B cell (primary cell): ENCODE measurements at regions of chr5 and their contacts with region 1.

Region 1: GRCh38 chr5:173781814-173782670 is 106.1 kb upstream of the CPEB4 start:
- DNase-seq: peak; percentile 89
- ATAC-seq: peak; percentile 79
- H3K4me3 ChIP-seq: peak overlapping the region in 1 of 5 experiments; percentile 15
- H3K4me3 Mint-ChIP-seq: peak overlapping the region; percentile 69
- H3K27ac ChIP-seq: peak overlapping the region; percentile 56 to 68
- H3K27ac Mint-ChIP-seq: peak overlapping the region; percentile 90
- H3K4me1 ChIP-seq: peaks cover 47 to 59% of the 10 kb centered on the region in 2 donors
- H3K4me1 Mint-ChIP-seq: peaks cover 63% of the 10 kb centered on the region
- H3K27me3 ChIP-seq: no peaks in the 10 kb centered on the region
- H3K27me3 Mint-ChIP-seq: no peaks in the 10 kb centered on the region
- CTCF ChIP-seq: no peak

Region 2: GRCh38 chr5:173679909-173680630 is 102.0 kb before region 1 on chr5:
- CTCF ChIA-PET with region 1: no interaction called
- POLR2A ChIA-PET with region 1: no interaction called
- intact Hi-C with region 1: loop called (anchors 5 kb)
- DNase-seq: peak; percentile 61
- ATAC-seq: peak; percentile 59
- H3K4me3 ChIP-seq: no peak overlapping the region
- H3K4me3 Mint-ChIP-seq: peak overlapping the region; percentile 70
- H3K27ac ChIP-seq: peak overlapping the region; percentile 81 to 88
- H3K27ac Mint-ChIP-seq: peak overlapping the region; percentile 94
- H3K4me1 ChIP-seq: peaks cover 17 to 20% of the 10 kb centered on the region in 2 donors
- H3K4me1 Mint-ChIP-seq: peaks cover 40% of the 10 kb centered on the region
- H3K27me3 ChIP-seq: no peaks in the 10 kb centered on the region
- H3K27me3 Mint-ChIP-seq: no peaks in the 10 kb centered on the region
- CTCF ChIP-seq: no peak

Region 3: DNA sequence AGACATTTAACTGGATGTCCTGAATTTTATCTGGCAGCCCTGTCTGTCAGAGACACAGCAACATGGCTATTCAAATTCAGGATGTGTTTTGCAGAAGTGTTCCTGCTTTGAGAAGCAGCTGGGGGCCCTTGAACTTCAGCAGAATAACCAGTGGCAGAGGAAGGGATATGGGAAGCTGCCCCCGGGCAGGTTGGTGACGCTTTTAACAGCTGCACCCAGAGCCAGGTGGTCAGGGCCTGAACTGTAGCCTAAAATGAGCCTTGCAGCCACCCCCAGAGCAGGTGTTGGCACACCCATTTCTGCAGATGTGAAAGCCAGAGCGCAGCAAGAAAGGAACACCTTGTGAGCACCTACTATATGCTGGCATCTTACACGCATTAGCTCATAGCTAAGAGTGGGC is 36.9 kb before region 1 on chr5:
- CTCF ChIA-PET with region 1: interaction called, 3 read pairs
- POLR2A ChIA-PET with region 1: no interaction called
- intact Hi-C with region 1: loop called (anchors 5 kb)
- DNase-seq: peak; percentile 86
- ATAC-seq: peak; percentile 81
- H3K4me3 ChIP-seq: peak overlapping the region in 1 of 5 experiments; percentile 5
- H3K4me3 Mint-ChIP-seq: peak overlapping the region; percentile 57
- H3K27ac ChIP-seq: peak overlapping the region; percentile 37 to 62
- H3K27ac Mint-ChIP-seq: peak overlapping the region; percentile 86
- H3K4me1 ChIP-seq: peaks cover 40 to 60% of the 10 kb centered on the region in 2 donors
- H3K4me1 Mint-ChIP-seq: peaks cover 64% of the 10 kb centered on the region
- H3K27me3 ChIP-seq: no peaks in the 10 kb centered on the region
- H3K27me3 Mint-ChIP-seq: no peaks in the 10 kb centered on the region
- CTCF ChIP-seq: no peak

Region 4: GRCh38 chr5:173823711-173824528 is 41.9 kb after region 1 on chr5:
- CTCF ChIA-PET with region 1: interaction called, 20 read pairs
- POLR2A ChIA-PET with region 1: interaction called, 8 read pairs
- intact Hi-C with region 1: loop called (anchors 1 kb)
- DNase-seq: no peak
- ATAC-seq: no peak
- H3K4me3 ChIP-seq: no peak overlapping the region
- H3K4me3 Mint-ChIP-seq: peak overlapping the region; percentile 9
- H3K27ac ChIP-seq: peak overlapping the region; percentile 12 to 55
- H3K27ac Mint-ChIP-seq: peak overlapping the region; percentile 46
- H3K4me1 ChIP-seq: peaks cover 69 to 73% of the 10 kb centered on the region in 2 donors
- H3K4me1 Mint-ChIP-seq: peaks cover 74% of the 10 kb centered on the region
- H3K27me3 ChIP-seq: no peaks in the 10 kb centered on the region
- H3K27me3 Mint-ChIP-seq: no peaks in the 10 kb centered on the region
- CTCF ChIP-seq: no peak

Region 5: DNA sequence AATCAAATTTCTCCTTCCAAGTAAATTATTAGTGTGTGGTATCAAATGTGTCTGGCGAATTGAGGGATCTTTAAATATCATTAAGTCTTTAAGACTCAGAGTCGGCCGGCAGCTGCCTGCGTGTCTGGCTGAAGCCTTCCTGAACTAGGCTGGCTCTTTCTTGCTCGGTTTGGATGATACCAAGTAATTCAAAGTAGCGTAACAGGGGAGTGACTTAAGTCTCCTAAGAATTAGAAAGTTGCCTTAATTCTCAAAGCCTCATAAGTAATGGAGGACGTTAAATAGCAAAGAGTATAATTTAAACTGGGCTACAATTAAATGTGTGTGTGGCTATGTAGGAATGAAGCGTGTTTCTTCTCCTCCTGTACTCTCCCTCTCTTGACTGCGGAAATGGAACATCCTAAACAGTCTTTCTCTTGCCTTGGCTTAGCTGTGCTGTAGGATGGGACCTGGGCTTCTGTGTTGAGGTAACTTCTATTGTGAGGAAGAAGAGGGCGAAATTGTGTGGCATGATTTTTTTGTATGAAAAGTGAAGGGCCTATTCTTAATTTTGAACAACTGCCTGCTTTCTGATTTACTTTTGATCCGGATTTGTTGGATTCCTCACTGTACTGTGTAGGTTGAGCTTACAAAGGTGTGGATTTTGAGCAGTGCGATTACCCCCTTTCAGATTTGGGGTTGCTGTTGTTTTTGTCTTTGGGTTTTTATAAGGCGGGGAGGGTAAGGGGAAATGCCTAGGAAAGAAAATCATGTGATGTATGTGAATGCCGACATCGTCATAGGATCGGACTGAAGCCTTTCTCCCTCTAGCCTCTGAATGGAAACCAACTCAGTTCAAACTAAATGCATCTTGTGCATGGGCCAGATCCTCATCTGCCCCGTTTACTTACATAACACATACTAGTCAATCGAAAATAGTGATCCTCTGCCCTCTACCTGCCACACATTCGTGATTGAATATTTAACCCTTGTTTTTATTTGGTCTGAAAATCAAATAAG is 136.0 kb after region 1 on chr5:
- CTCF ChIA-PET with region 1: interaction called, 11 read pairs
- POLR2A ChIA-PET with region 1: no interaction called
- intact Hi-C with region 1: loop called (anchors 2 kb)
- DNase-seq: peak; percentile 92
- ATAC-seq: peak; percentile 89
- H3K4me3 ChIP-seq: peak overlapping the region; percentile 43 to 81 (median 62)
- H3K4me3 Mint-ChIP-seq: no peak overlapping the region
- H3K27ac ChIP-seq: peak overlapping the region; percentile 82 to 95
- H3K27ac Mint-ChIP-seq: no peak overlapping the region
- H3K4me1 ChIP-seq: peaks cover 18 to 24% of the 10 kb centered on the region in 2 donors
- H3K4me1 Mint-ChIP-seq: peaks cover 22% of the 10 kb centered on the region
- H3K27me3 ChIP-seq: no peaks in the 10 kb centered on the region
- H3K27me3 Mint-ChIP-seq: no peaks in the 10 kb centered on the region
- CTCF ChIP-seq: no peak

Region 6: GRCh38 chr5:173925448-173926071 is 143.5 kb after region 1 on chr5:
- CTCF ChIA-PET with region 1: interaction called, 28 read pairs
- POLR2A ChIA-PET with region 1: no interaction called
- intact Hi-C with region 1: no loop called
- DNase-seq: peak; percentile 68
- ATAC-seq: no peak
- H3K4me3 ChIP-seq: no peak overlapping the region
- H3K4me3 Mint-ChIP-seq: no peak overlapping the region
- H3K27ac ChIP-seq: no peak overlapping the region
- H3K27ac Mint-ChIP-seq: no peak overlapping the region
- H3K4me1 ChIP-seq: peaks cover 6 to 8% of the 10 kb centered on the region in 2 donors
- H3K4me1 Mint-ChIP-seq: peaks cover 27% of the 10 kb centered on the region
- H3K27me3 ChIP-seq: no peaks in the 10 kb centered on the region
- H3K27me3 Mint-ChIP-seq: no peaks in the 10 kb centered on the region
- CTCF ChIP-seq: peak; percentile 74

Region 7: GRCh38 chr5:173972925-173973615 is 191.0 kb after region 1 on chr5:
- CTCF ChIA-PET with region 1: interaction called, 12 read pairs
- POLR2A ChIA-PET with region 1: no interaction called
- intact Hi-C with region 1: loop called (anchors 1 kb)
- DNase-seq: peak; percentile 87
- ATAC-seq: peak; percentile 85
- H3K4me3 ChIP-seq: peak overlapping the region in 4 of 5 experiments; percentile 14 to 50 (median 40)
- H3K4me3 Mint-ChIP-seq: peak overlapping the region; percentile 85
- H3K27ac ChIP-seq: no peak overlapping the region
- H3K27ac Mint-ChIP-seq: no peak overlapping the region
- H3K4me1 ChIP-seq: peaks cover 13 to 14% of the 10 kb centered on the region in 2 donors
- H3K4me1 Mint-ChIP-seq: peaks cover 11% of the 10 kb centered on the region
- H3K27me3 ChIP-seq: peaks cover 0 to 7% (median 3%) of the 10 kb centered on the region in 4 experiments
- H3K27me3 Mint-ChIP-seq: peaks cover 27% of the 10 kb centered on the region
- CTCF ChIP-seq: peak; percentile 87